ENCODE measurements at regions of chr7 and their contacts with region 1.

Region 1: DNA sequence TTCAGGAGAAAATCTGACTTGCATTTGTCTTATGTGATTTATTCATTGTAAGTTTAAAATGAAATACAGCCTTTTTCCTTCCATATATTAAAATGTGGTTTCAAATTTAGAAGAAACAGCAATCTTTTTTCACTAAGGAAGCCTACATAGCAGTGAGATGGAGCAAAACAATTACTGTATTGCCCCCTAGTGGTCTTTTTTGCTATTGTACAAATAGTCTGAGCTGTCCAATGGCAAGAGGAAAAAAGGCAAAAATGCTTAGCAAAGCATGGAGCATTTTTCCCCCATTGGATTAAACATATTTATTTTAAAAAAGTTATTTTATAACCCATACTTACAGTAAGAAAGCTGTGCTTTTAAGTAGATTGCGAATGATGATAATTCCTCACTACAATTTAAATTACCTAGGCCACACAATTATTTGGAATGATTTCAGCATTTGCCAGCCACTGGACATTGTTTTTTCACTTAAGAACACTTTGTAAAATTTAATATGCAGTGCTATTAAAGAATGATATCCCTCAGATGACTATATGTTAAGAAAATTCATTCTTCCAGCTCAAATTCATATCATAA is 119.5 kb downstream of the CPED1 start:
- DNase-seq: peak; percentile 21
- CTCF ChIP-seq: peak; percentile 77

Region 2: DNA sequence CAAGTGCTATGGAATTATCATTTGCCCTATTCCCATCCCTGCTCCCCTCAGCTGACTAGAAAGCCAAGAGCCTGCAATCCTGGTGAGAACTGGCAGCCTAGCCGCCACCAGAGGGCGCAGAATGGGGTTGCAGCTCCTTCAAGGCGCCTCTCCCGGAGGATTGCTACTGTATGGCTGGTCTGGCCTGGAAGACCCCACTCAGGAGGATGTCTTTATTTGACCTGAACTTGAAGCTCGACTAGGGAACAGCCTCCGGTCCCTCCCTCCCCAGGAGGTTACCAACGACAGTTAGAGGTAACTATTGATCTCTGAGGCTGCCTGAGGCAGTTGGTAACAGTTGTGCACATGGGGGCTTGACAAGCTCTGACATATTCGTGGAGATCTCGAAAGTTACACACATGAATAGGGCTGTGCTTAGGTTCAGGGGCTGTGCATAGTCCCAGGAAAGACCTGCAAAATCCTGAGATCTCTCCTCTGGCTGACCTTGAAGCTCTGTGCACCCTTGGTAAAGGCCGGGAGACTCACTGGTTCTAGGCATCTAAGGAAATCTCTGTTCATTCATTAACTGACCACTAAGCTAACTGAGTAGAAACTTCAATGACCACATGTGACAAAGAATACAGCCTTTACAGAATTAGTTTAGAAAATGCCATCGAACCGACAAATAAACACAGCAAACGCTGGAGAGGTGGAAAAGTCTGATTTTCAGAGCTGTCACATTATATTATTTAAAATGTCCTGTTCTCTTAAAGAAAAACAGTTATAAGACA is 315.7 kb before region 1 on chr7:
- in situ Hi-C with region 1: loop called (anchors 25 kb)
- DNase-seq: peak; percentile 35
- CTCF ChIP-seq: peak; percentile 97

Region 3: GRCh38 chr7:121459148-121459547 is 351.1 kb after region 1 on chr7:
- in situ Hi-C with region 1: no loop called
- DNase-seq: no peak
- CTCF ChIP-seq: no peak

Region 4: DNA sequence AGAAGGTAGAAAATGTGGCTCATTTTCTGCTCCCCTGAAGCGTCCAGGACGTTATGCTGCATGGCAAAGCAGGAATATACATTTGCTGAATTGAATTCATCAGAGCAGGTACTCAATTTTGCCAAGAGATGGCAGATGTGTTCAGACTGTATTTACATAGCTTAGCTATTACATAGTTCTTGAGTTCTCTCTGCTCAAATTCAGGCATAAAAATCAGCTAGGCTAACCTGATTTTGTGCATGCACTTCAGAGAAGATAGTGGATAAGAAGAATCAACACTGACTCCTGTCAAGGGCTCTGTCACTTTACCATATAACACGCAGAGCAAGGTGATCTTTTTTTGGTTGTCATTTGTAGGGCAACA is 497.3 kb after region 1 on chr7:
- in situ Hi-C with region 1: no loop called
- DNase-seq: no peak
- CTCF ChIP-seq: no peak